ENCODE measurements at regions of chr5 and their contacts with region 1.

Region 1: DNA sequence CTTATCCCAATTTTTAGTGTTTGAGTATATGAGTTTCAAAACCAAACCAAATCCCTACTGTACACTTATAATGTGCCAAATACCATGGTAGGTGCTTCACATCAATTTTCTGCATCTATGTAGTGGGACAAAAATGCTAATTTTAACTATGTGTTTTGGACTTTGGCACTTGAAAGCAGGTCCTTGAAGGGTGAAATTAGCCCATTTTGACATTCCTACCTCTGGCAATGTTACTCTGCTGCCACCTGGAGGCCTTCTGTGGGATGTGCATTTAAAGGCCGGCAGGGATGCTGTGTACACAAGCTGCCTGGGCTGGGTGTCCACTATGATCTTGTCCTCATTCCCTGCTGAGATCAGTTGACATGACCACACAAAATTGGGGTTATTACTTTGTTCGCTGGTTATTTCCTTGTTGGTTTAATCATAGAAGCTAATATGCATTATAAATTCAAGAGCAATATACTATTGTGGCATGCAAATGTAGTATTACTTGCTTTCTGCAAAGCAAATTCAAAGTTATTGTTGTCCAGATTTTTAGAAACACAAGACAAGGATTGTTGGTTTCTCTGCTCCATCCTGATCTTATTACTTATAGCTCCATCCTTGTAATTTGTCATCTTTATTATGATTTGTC is 166.8 kb downstream of the ARHGEF28 start:
- DNase-seq: no peak
- H3K4me3 ChIP-seq: no peak overlapping the region
- H3K27ac ChIP-seq: no peak overlapping the region
- H3K27me3 ChIP-seq: no peaks in the 10 kb centered on the region
- CTCF ChIP-seq: peak; percentile 100

Region 2: GRCh38 chr5:73565139-73565968 is 227.4 kb before region 1 on chr5 and contains the starts of genes ANKRA2 and UTP15:
- CTCF ChIA-PET with region 1: interaction called, 15 read pairs
- POLR2A ChIA-PET with region 1: no interaction called
- DNase-seq: peak; percentile 95
- H3K4me3 ChIP-seq: peak within 1 kb of the TSS; percentile 98
- H3K27ac ChIP-seq: peak within 1 kb of the TSS; percentile 84
- H3K27me3 ChIP-seq: no peaks in the 10 kb centered on the region
- CTCF ChIP-seq: no peak
- polyA plus RNA-seq, gene ANKRA2: 24.9 and 39.6 TPM in 2 replicates
- polyA plus RNA-seq, gene UTP15: 11.3 and 15.3 TPM in 2 replicates

Region 3: DNA sequence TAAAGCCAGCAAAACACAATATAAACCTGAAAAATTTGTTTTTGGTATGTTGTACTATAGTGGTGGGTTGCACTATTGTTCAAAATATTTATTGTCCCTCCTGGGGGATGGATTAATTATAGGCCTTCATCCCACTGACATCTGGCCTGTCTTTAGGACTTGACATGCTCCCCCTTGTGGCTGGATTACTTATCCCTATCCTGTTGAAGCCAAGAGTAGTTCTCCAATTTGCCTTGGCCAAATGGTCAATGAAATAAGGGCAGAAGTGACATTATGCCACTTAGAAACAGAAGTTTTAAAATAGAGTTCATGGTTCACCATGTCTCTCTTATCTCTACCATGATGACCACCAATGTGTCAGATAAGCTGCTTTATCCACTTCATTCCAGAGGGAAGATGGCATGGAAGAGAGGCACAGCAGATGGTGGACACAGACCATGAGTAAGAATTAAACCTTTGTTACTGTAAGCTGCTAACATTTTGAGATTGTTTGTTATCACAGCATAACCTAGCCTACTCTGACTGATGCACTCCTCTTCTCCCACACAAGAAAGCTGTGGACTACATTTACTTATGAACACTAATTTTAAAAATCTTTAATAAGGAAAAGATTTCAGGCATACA is 196.0 kb before region 1 on chr5:
- CTCF ChIA-PET with region 1: interaction called, 352 read pairs
- POLR2A ChIA-PET with region 1: no interaction called
- DNase-seq: no peak
- H3K4me3 ChIP-seq: no peak overlapping the region
- H3K27ac ChIP-seq: no peak overlapping the region
- H3K27me3 ChIP-seq: no peaks in the 10 kb centered on the region
- CTCF ChIP-seq: peak; percentile 47

Region 4: DNA sequence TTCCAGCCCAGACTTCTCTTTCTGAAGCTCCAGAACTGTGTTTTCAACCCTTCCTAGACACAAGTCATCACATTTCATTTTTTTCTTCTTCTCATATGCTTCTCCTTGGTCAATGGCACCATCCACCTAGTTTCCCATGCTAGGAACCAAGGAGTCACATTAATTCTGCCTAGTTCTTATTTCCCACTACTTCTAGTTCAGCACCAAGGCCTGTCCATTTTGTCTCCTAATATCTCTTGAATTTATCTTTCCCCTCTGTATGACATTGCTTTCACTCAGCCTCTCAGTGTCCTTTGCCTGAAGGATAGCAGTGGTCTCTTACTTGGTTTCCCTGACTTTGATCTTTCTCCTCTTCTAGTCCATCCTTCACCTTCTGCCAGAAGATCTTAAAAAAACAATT is 128.0 kb before region 1 on chr5:
- CTCF ChIA-PET with region 1: no interaction called
- POLR2A ChIA-PET with region 1: no interaction called
- DNase-seq: no peak
- H3K4me3 ChIP-seq: no peak overlapping the region
- H3K27ac ChIP-seq: no peak overlapping the region
- H3K27me3 ChIP-seq: no peaks in the 10 kb centered on the region
- CTCF ChIP-seq: no peak

Region 5: GRCh38 chr5:73693481-73694061 is 99.2 kb before region 1 on chr5:
- CTCF ChIA-PET with region 1: interaction called, 10 read pairs
- POLR2A ChIA-PET with region 1: no interaction called
- DNase-seq: peak; percentile 18
- H3K4me3 ChIP-seq: no peak overlapping the region
- H3K27ac ChIP-seq: peak overlapping the region; percentile 39
- H3K27me3 ChIP-seq: no peaks in the 10 kb centered on the region
- CTCF ChIP-seq: peak; percentile 62

Region 6: DNA sequence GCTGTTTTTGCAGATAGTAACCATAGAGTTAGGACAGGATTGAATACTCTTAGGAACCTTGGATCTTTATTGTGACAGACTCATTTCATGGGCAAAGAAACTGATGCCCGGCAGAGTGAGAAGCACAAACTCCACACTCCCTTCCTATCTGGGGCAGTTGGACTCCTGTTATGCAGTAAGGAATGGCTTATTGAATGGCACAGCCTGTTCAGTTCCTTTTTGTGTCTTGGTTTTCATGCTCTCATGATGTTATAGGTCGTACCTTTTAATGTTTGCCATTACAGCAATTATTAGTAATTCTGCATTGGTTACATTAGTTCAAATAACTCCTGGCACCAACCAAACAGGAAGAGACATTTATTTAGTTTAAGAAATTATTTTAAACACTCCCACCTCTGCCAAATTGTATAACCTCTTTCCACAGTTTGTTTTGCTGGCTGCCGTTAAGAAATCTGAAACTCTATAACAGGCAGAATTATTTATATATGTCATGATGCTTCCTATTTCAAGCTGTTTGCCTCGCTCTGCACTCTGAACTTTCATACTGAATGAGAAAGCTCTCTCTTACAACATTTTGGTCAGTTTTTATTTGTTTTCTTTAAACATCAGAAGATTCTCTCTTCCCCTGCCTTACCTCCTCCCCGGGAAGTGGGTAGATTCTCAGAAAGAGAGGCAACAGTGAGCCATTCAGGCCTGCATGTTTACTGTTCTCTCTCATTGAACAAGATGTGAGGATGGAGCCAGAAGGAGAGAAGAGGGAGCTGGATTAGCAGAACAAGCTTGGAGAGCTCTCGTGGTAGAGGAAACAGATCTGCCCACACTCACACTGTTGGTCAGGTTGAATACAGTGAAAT is 22.4 kb before region 1 on chr5:
- CTCF ChIA-PET with region 1: interaction called, 11 read pairs
- POLR2A ChIA-PET with region 1: no interaction called
- DNase-seq: no peak
- H3K4me3 ChIP-seq: no peak overlapping the region
- H3K27ac ChIP-seq: no peak overlapping the region
- H3K27me3 ChIP-seq: no peaks in the 10 kb centered on the region
- CTCF ChIP-seq: no peak

Region 7: DNA sequence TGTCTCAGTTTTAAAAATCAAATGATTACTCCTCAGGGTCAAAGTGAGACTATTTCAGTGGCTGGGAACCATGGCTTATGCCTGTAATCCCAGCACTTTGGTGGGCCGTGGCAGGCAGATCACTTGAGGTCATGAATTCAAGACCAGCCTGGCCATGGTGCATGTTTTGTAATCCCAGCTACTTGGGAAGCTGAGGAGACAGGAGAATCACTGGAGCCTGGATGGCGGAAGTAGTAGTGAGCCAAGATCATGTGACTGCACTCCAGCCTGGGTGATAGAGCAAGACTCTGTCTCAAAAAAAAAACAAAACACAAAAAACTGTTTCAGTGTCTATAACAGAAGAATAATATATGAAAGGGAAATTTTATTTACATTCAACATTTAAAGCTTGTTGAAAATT is 16.1 kb after region 1 on chr5:
- CTCF ChIA-PET with region 1: interaction called, 11 read pairs
- POLR2A ChIA-PET with region 1: interaction called, 4 read pairs
- DNase-seq: no peak
- H3K4me3 ChIP-seq: no peak overlapping the region
- H3K27ac ChIP-seq: no peak overlapping the region
- H3K27me3 ChIP-seq: no peaks in the 10 kb centered on the region
- CTCF ChIP-seq: no peak

Region 8: GRCh38 chr5:73818357-73818756 is 25.6 kb after region 1 on chr5:
- CTCF ChIA-PET with region 1: interaction called, 12 read pairs
- POLR2A ChIA-PET with region 1: interaction called, 4 read pairs
- DNase-seq: peak; percentile 47
- H3K4me3 ChIP-seq: no peak overlapping the region
- H3K27ac ChIP-seq: no peak overlapping the region
- H3K27me3 ChIP-seq: no peaks in the 10 kb centered on the region
- CTCF ChIP-seq: no peak